ENCODE measurements at regions of chr12 and their contacts with region 1.

Region 1: DNA sequence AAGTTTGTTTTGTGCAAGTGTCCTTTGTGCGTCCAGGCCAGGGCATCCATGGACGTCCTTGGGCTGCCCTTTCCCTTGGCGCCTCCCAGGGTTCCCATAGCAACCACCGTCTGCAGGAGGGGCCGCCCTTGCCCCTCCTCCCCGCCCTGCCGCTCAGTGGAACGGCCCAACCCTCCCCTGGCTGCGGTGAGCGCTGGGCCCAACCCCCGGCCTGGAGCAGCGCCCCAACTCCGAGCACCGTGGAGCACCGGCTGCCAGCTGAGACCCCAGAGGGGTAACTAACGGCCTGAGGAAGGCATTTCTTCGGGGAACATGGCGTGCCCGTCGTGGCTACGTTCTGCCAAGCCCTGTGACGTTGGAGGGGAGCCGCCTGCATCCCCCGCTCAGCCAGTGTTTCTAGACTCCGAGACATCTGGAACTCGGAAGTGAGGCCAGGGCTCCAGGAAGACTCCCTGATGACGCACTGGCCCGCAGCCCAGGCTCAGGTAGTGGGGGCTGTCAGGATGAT is 5.3 kb upstream of the ACACB start:
- DNase-seq: peak; percentile 87
- H3K4me3 ChIP-seq: peak overlapping the region; percentile 47 to 55
- H3K27ac ChIP-seq: peak overlapping the region; percentile 90
- H3K4me1 ChIP-seq: peaks cover 11% of the 10 kb centered on the region
- H3K27me3 ChIP-seq: no peaks in the 10 kb centered on the region
- CTCF ChIP-seq: peak in 2 of 4 experiments; percentile 13 to 16
- POLR2A ChIP-seq: peak; percentile 67

Region 2: DNA sequence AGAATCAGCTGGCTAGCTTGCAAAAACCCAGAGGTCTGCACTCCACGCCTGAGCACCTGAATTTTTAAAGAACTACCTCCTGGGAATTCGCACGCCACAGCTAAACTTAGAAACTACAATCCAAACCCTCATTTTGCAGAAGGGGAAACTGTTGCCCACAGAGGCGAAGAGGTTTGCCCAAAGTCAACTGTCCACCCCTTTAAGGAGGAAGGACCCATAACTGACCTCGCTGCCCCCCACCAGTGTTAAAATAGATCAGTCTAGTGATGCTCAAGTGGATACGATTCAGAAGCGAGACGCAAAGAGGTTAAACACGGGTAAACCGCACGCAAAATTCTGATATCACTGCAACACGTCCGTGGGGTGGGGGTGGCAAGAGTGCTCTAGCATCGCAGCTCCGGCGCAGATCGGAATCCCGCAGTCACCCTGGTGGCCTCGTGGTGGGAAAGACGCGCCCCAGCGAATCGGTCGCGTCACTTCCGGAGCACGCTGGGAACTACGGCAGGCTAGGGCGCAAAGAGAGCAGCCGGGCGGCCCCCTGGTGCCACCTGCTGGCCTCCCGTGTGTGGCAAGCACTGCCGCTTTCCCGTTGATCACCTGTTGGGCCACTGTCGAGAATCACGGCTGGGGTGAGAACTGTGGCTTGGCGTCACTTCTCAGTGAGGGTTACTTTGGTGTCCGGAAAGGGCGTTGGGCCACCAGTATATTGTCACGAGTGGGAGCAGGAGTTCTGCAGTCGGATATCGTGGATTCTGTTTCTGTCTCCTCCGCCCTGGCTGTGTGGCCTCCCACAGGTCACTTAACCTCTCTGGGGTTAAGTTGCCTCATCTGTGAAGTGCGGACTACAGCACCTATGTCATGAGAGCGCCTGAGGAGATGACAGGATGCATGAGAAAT is 17.8 kb before region 1 on chr12 and contains the start of gene ALKBH2:
- intact Hi-C with region 1: no loop called
- DNase-seq: peak; percentile 89
- H3K4me3 ChIP-seq: peak within 1 kb of the TSS; percentile 43 to 46
- H3K27ac ChIP-seq: peak within 1 kb of the TSS in 1 of 2 donors; percentile 55
- H3K4me1 ChIP-seq: no peaks in the 10 kb centered on the region
- H3K27me3 ChIP-seq: no peaks in the 10 kb centered on the region
- CTCF ChIP-seq: peak; percentile 94 to 99 (median 98)
- POLR2A ChIP-seq: no peak
- total RNA-seq, gene ALKBH2: 16.6 to 26.2 TPM

Region 3: DNA sequence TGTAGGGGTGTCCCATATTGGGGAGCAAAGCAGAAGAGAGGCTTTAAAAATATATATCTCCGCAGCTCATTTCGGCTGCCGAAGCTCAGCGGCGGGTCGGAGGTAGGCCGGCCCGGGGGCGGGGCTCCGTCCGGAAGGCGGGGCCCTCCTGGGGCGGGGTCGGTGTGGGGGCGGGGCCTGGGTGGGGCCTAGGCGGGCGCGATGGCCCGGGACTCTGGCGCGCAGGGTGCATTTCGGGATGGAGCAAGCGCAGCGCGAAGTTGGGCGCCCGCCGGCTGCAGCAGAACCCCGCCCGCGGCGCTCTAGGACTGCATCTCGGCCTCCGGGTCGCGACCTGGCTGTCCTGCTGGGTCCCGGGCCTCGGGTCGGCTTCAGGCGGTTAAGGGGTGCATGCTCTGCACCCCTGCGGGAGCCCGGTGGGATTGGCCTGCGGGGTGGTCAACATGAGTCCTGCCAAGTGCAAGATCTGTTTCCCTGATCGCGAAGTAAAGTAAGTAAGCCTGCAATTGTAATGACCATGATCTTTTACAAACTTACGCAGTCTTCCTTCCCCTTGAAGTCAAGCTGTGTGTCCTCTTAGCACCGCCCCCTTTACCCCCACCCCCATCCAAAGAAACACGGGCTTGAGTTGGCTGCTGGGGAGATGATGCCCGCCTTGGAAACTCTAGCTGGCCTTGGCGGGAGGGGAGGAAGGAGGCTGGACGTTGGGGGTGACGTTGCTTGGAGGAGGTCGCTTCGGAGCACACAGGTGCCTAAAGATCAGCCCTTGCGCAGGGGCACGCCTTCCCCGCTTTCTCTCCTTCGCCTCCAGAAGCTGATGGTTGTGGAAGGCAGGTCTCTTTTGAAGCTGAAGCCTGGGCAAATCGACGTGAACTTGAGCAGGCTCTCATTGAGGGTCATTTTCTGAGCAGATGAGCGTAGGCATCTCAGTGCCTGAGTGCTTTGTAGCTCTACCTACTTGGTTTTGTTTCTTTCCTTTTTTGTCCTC is 43.7 kb after region 1 on chr12:
- intact Hi-C with region 1: loop called (anchors 2 kb)
- DNase-seq: peak; percentile 76
- H3K4me3 ChIP-seq: peak overlapping the region; percentile 57 to 62
- H3K27ac ChIP-seq: peak overlapping the region; percentile 80 to 87
- H3K4me1 ChIP-seq: peaks cover 11% of the 10 kb centered on the region
- H3K27me3 ChIP-seq: no peaks in the 10 kb centered on the region
- CTCF ChIP-seq: peak in 1 of 4 experiments; percentile 11
- POLR2A ChIP-seq: peak; percentile 53

Region 4: DNA sequence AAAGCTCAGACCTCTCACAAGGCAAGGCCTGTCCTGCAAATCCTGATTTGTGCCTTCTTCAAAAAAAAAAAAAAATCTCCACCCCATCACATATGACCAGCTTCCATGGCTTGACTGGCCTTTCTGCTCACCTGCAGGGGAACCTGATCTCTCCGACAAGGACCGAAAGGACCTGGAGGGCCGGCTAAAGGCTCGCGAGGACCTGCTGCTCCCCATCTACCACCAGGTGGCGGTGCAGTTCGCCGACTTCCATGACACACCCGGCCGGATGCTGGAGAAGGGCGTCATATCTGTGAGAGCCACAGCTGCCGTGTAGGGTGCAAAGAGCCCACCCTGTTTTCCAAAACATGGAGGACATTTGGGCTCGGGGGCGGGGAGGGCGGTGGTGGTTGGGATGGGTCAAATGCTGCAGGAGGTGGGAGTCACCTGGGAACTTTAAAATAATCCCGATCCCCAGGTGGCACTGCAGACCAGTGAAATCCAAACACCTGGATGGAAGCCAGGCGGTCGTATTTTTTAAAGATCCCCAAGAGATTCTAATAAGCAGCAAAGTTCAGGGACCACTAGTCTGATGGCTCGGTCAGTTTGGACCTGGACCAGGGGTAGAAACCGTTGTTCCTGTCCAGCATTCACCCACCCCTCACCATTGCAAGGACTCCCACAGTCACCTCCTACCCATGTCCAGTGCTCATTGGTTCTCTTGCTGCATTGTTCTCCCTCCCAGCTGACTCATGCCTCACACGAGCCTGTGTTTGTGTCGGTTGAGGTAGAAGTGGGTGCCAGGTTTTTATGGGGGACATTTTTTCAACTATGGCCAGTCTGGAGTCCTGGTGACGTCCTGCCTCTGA is 153.3 kb after region 1 on chr12:
- intact Hi-C with region 1: no loop called
- DNase-seq: peak; percentile 62
- H3K4me3 ChIP-seq: no peak overlapping the region
- H3K27ac ChIP-seq: peak overlapping the region in 1 of 2 donors; percentile 54
- H3K4me1 ChIP-seq: no peaks in the 10 kb centered on the region
- H3K27me3 ChIP-seq: no peaks in the 10 kb centered on the region
- CTCF ChIP-seq: peak; percentile 48 to 81 (median 78)
- POLR2A ChIP-seq: no peak

Region 5: DNA sequence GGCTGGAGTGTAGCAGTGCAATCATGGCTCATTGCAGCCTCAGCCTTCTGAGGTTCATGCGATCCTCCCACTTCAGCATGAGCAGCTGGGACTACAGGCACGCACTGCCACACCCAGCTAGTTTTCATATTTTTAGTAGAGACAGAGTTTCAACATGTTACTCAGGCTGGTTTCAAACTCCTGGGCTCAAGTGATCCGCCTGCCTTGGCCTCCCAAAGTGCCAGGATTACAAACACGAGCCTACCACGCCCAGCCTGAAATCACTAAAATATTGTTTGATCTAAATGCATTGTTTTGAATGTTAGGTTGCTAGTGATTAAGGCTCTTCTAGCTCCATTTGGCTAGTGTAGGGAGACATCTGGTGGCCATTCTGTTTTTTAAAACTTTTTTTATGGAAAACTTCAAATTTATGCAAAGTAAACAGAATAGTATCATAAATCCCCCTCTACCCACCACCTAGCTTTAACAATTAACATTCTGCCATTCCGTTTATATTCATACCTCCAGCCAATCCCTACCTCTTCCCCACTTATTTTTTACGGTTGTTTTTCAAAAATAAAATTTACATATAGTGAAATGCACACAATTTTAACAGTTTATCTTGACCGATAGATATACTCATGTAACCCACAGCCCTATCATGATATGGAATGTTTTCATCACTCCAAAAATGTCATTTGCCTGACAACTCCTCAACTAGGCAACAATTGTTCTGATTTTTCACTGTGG is 274.5 kb after region 1 on chr12:
- intact Hi-C with region 1: loop called (anchors 10 kb)
- DNase-seq: no peak
- H3K4me3 ChIP-seq: no peak overlapping the region
- H3K27ac ChIP-seq: no peak overlapping the region
- H3K4me1 ChIP-seq: no peaks in the 10 kb centered on the region
- H3K27me3 ChIP-seq: no peaks in the 10 kb centered on the region
- CTCF ChIP-seq: peak in 3 of 4 experiments; percentile 58 to 65 (median 59)
- POLR2A ChIP-seq: no peak

Measured in prostate gland (tissue), 2 donors.